Mucosa of descending colon (tissue), 3 donors: ENCODE measurements at regions of chr18 and their contacts with region 1.

Region 1: DNA sequence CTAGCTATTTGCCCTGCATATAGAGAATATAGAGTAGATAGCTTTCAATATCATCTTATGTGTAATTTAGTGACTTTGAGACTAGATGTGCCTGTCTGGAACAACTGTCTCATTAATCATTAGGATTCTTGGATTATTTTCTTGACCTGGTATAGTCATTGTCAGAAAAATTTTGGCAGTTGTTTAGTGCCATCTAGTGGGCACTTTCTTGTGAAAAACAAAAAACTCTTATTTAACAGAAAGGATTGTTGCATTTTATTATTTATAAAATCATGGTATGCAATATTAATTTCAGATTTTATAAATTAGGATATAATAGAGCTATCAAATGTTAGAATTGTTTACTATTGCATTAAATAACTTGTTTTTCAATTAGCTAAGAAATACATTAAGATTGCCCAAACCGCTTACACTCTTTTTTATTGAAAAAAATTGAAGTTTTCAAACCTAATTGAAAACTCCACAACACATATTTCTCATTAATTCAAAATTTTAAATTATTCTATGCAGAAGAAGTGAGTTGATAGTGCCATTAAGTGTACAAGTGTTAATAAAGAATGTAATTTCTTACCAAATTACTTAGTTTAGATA is 80.3 kb downstream of the DYNAP start:
- DNase-seq: peak in 1 of 3 donors; percentile 51
- ATAC-seq: no peak
- H3K4me3 ChIP-seq: no peak overlapping the region
- H3K4me1 ChIP-seq: peaks cover 3% of the 10 kb centered on the region
- CTCF ChIP-seq: no peak

Region 2: GRCh38 chr18:54444319-54444914 is 227.0 kb before region 1 on chr18:
- intact Hi-C with region 1: loop called in 1 of 2 experiments (anchors 2 kb)
- DNase-seq: peak; percentile 50 to 84 (median 77)
- ATAC-seq: peak; percentile 91
- H3K4me3 ChIP-seq: no peak overlapping the region
- H3K4me1 ChIP-seq: no peaks in the 10 kb centered on the region
- CTCF ChIP-seq: peak; percentile 39

Region 3: GRCh38 chr18:55907453-55908175 is 1236.2 kb after region 1 on chr18:
- intact Hi-C with region 1: no loop called
- DNase-seq: peak in 1 of 3 donors; percentile 10
- ATAC-seq: no peak
- H3K4me3 ChIP-seq: no peak overlapping the region
- H3K4me1 ChIP-seq: no peaks in the 10 kb centered on the region
- CTCF ChIP-seq: no peak